Ascending aorta (tissue), 2 donors: ENCODE measurements at regions of chr10 and their contacts with region 1.

Region 1: DNA sequence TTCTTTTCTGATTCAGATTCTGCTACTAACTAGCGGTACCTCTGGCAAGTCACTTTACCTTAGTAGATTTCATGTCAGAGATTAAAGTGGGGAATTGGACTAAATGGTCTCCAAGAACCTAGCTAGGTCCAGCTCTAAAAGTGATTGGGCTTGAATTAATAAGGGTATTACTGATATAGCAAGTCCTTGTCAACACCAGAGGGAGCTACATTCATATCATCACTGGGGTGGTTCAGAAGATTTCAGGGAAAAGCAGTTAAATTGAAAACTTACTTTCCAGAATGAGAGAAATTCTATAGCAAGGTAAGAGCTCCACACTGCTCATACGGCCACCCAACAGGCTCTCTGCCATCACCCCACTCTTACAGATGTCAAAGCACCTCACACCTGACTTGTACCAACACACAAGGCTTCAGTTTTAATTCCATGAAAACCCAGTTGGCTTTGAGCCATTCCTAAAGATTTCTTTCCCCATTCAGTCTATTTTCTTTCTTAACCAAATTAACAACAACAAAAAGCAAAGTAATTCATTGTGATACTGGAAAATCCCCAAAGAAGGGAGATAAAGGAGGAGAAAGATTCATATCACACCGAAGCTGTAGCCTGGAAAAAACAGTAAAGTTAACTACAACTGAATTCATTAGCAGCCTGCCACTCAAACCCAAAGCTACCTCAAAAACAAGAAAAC is 38.0 kb upstream of the SPOCK2 start:
- DNase-seq: no peak
- H3K4me3 ChIP-seq: no peak overlapping the region
- H3K27ac ChIP-seq: peak overlapping the region in 1 of 2 donors; percentile 21
- H3K4me1 ChIP-seq: peaks cover 0 to 7% of the 10 kb centered on the region in 2 donors
- H3K27me3 ChIP-seq: no peaks in the 10 kb centered on the region
- CTCF ChIP-seq: no peak

Region 2: DNA sequence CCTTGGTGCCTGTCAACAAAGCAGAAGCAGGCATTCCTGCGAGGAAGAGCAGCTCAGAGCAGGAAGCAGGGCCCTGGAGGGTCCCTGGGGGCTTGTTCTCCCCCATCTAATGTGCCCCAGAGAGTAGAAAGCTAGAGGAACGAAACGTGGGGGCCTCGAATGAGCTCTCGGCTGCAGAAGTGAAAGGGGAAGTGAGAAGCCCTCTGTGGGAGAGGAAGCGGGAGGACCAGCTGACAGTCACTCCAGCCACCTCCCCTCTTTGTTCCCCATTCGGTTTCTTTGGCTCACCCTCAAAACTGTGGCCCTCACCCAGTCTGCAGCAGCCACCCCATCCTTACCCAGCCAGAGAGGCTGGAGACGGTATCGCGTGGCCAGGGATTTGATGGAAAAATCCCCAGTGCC is 431.8 kb before region 1 on chr10:
- intact Hi-C with region 1: no loop called
- DNase-seq: no peak
- H3K4me3 ChIP-seq: no peak overlapping the region
- H3K27ac ChIP-seq: no peak overlapping the region
- H3K4me1 ChIP-seq: no peaks in the 10 kb centered on the region
- H3K27me3 ChIP-seq: no peaks in the 10 kb centered on the region
- CTCF ChIP-seq: no peak

Region 3: DNA sequence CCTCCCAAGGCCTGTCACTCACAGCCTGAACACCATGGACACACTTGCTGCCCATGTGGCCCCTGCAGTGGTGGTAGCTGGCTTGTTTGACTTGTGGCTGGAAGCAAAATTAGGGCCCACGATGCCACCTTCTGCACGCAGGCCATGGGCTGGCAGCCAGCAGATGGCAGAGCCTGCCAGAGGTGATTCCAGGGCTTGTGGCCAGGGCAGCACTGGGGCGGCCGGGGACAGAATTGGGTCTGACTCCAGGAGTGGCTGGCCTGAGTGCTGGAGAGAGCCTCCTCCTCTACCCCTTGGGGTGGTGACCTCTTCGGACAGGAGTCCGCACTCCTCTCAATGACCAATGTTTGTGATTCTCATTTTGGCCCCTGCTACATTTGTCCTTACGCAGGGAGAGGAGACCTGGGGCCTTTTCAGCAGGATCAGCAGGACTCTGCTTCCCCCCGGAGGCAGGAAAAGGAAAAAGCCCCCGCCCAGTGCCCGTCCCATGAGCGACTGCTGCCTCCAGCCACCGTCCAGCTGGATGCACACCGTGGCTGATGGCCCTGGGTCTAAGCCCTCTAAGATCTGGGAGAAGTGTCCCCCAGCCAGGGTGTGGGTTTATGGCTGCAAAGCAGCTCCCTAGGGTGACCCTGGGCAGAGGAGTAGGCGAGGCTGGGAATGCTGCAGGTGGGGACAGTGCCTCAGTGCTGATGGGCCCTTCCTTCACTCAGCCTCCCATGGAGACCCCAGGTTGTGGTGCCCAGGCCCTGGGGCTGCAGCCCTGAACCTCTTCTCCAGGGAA is 201.9 kb after region 1 on chr10:
- intact Hi-C with region 1: loop called (anchors 5 kb)
- DNase-seq: no peak
- H3K4me3 ChIP-seq: no peak overlapping the region
- H3K27ac ChIP-seq: peak overlapping the region; percentile 33 to 42
- H3K4me1 ChIP-seq: peaks cover 0 to 40% of the 10 kb centered on the region in 2 donors
- H3K27me3 ChIP-seq: no peaks in the 10 kb centered on the region
- CTCF ChIP-seq: peak; percentile 59 to 75 (median 72)

Region 4: GRCh38 chr10:73110345-73110849 is 984.1 kb after region 1 on chr10 and contains the start of gene NUDT13:
- intact Hi-C with region 1: no loop called
- DNase-seq: peak in 1 of 2 donors; percentile 88
- H3K4me3 ChIP-seq: peak within 1 kb of the TSS; percentile 63 to 66
- H3K27ac ChIP-seq: peak within 1 kb of the TSS; percentile 81 to 88
- H3K4me1 ChIP-seq: no peaks in the 10 kb centered on the region
- H3K27me3 ChIP-seq: no peaks in the 10 kb centered on the region
- CTCF ChIP-seq: no peak
- total RNA-seq, gene NUDT13: 7.6 TPM